Dorsolateral prefrontal cortex (tissue), 120 donors: ENCODE measurements at regions of chr7 and their contacts with region 1.

Region 1: GRCh38 chr7:151028131-151028947 is at the start of gene ABCB8:
- DNase-seq: peak; percentile 92 to 99 (median 97)
- H3K4me3 ChIP-seq: peak within 1 kb of the TSS; percentile 64 to 98 (median 84)
- H3K27ac ChIP-seq: peak within 1 kb of the TSS; percentile 39 to 96 (median 89)
- H3K27me3 ChIP-seq: peaks cover 0 to under 1% (median 0%) of the 10 kb centered on the region in 45 donors
- CTCF ChIP-seq: peak; percentile 23 to 83 (median 62)
- total RNA-seq, gene ABCB8: 52.6 to 110 (median 74.3) TPM

Region 2: GRCh38 chr7:151057989-151058780 is 29.8 kb after region 1 on chr7:
- intact Hi-C with region 1: loop called (anchors 1 to 2 kb)
- DNase-seq: peak; percentile 98 to 100 (median 100)
- H3K4me3 ChIP-seq: peak overlapping the region; percentile 45 to 95 (median 81)
- H3K27ac ChIP-seq: peak overlapping the region; percentile 92 to 100 (median 100)
- H3K27me3 ChIP-seq: peaks cover 0 to 7% (median 0%) of the 10 kb centered on the region in 45 donors
- CTCF ChIP-seq: peak in 38 of 56 donors; percentile 8 to 59 (median 33)

Region 3: GRCh38 chr7:151085691-151086620 is 57.6 kb after region 1 on chr7 and contains the start of gene AGAP3:
- intact Hi-C with region 1: loop called in 1 of 2 experiments (anchors 2 kb)
- DNase-seq: peak; percentile 75 to 94 (median 83)
- H3K4me3 ChIP-seq: peak within 1 kb of the TSS; percentile 58 to 96 (median 85)
- H3K27ac ChIP-seq: peak within 1 kb of the TSS; percentile 88 to 99 (median 95)
- H3K27me3 ChIP-seq: no peaks in the 10 kb centered on the region
- CTCF ChIP-seq: peak in 3 of 56 donors; percentile 10 to 28 (median 12)
- total RNA-seq, gene AGAP3: 309 to 533 (median 426) TPM

Region 4: GRCh38 chr7:151110941-151111645 is 82.8 kb after region 1 on chr7:
- intact Hi-C with region 1: loop called in 1 of 2 experiments (anchors 2 kb)
- DNase-seq: peak; percentile 65 to 86 (median 77)
- H3K4me3 ChIP-seq: peak overlapping the region in 5 of 59 donors; percentile 7 to 29 (median 10)
- H3K27ac ChIP-seq: peak overlapping the region in 7 of 59 donors; percentile 2 to 44 (median 16)
- H3K27me3 ChIP-seq: no peaks in the 10 kb centered on the region
- CTCF ChIP-seq: peak; percentile 63 to 96 (median 91)

Region 5: GRCh38 chr7:151226875-151227782 is 198.8 kb after region 1 on chr7 and contains the start of gene ABCF2:
- intact Hi-C with region 1: loop called in 1 of 2 experiments (anchors 10 kb)
- DNase-seq: peak; percentile 98 to 100 (median 100)
- H3K4me3 ChIP-seq: peak within 1 kb of the TSS; percentile 63 to 98 (median 92)
- H3K27ac ChIP-seq: peak within 1 kb of the TSS in 58 of 59 donors; percentile 7 to 91 (median 82)
- H3K27me3 ChIP-seq: no peaks in the 10 kb centered on the region
- CTCF ChIP-seq: peak in 41 of 56 donors; percentile 3 to 64 (median 36)
- total RNA-seq, gene ABCF2: 21.6 to 63.3 (median 47.2) TPM